ENCODE measurements at regions of chr21 and their contacts with region 1.

Region 1: GRCh38 chr21:15742052-15742670 is 12.4 kb downstream of the USP25 start:
- DNase-seq: no peak
- ATAC-seq: no peak
- H3K4me3 ChIP-seq: no peak overlapping the region
- H3K27ac ChIP-seq: no peak overlapping the region
- H3K4me1 ChIP-seq: peaks cover 15% of the 10 kb centered on the region
- H3K27me3 ChIP-seq: no peaks in the 10 kb centered on the region
- CTCF ChIP-seq: no peak

Region 2: GRCh38 chr21:15355066-15355465 is 387.1 kb before region 1 on chr21:
- CTCF ChIA-PET with region 1: no interaction called
- POLR2A ChIA-PET with region 1: no interaction called
- in situ Hi-C with region 1: no loop called
- intact Hi-C with region 1: no loop called
- DNase-seq: no peak
- ATAC-seq: no peak
- H3K4me3 ChIP-seq: no peak overlapping the region
- H3K27ac ChIP-seq: no peak overlapping the region
- H3K4me1 ChIP-seq: no peaks in the 10 kb centered on the region
- H3K27me3 ChIP-seq: no peaks in the 10 kb centered on the region
- CTCF ChIP-seq: no peak

Region 3: GRCh38 chr21:15754640-15755039 is 12.5 kb after region 1 on chr21:
- CTCF ChIA-PET with region 1: interaction called, 12 read pairs
- POLR2A ChIA-PET with region 1: no interaction called
- in situ Hi-C with region 1: no loop called
- intact Hi-C with region 1: no loop called
- DNase-seq: no peak
- ATAC-seq: no peak
- H3K4me3 ChIP-seq: no peak overlapping the region
- H3K27ac ChIP-seq: no peak overlapping the region
- H3K4me1 ChIP-seq: no peaks in the 10 kb centered on the region; the same call in 1 of the 2 replicates
- H3K27me3 ChIP-seq: no peaks in the 10 kb centered on the region
- CTCF ChIP-seq: no peak

Region 4: DNA sequence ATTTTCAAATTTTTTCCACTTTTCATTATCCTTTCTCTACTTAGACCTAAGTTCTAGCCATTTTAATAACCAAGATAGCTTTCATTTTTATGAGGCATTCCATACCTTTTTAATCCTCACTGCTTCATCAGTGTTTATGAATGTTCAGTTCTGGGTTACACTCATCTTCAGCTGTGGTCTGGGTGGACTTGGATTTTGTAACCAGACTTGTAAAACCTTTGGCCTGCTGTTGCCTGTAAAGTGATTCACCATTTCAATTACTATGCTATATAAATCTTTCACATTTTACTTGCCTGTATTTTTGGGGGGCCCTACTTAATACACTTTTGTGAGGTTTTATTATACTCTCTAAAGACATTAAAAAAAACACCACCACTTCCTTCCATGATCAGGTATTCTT is 33.8 kb after region 1 on chr21:
- CTCF ChIA-PET with region 1: no interaction called
- POLR2A ChIA-PET with region 1: no interaction called
- in situ Hi-C with region 1: no loop called
- intact Hi-C with region 1: no loop called
- DNase-seq: no peak
- ATAC-seq: no peak
- H3K4me3 ChIP-seq: no peak overlapping the region
- H3K27ac ChIP-seq: no peak overlapping the region
- H3K4me1 ChIP-seq: no peaks in the 10 kb centered on the region
- H3K27me3 ChIP-seq: no peaks in the 10 kb centered on the region
- CTCF ChIP-seq: no peak

Measured in Panc1 (cell line).